Activated naive CD4-positive, alpha-beta T cell treated with anti-CD3 and anti-CD28 coated beads for 36 hours (primary cell): ENCODE measurements at regions of chr10 and their contacts with region 1.

Region 1: DNA sequence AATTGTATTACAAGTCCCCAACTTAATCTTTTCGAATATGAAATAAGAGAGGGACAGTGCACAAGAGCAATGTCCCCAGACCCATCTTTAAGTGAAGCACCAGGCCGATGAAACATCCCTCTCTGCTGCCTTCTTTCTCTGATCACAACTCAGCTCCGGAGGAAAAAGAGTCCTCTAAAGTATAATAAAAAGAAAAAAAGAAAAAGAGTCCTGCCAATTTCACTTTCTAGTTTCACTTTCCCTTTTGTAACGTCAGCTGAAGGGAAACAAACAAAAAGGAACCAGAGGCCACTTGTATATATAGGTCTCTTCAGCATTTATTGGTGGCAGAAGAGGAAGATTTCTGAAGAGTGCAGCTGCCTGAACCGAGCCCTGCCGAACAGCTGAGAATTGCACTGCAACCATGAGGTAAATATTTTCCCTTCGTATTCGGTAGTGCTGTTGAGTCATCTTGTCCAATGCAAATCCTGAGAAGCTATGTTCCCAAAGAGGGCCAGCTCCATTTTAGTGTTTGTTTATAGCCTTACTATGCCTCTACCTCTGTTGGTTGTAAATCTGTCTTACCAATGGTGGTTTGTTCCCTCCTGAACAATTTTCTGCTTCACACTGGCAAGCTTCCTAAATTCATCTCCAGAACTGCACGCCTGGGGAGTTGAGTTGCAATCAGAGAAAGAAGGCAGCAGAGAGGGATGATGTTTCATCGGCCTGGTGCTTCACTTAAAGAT is at the start of gene IFIT2:
- DNase-seq: peak; percentile 22
- H3K4me3 Mint-ChIP-seq: peak within 1 kb of the TSS; percentile 79
- H3K27ac Mint-ChIP-seq: peak within 1 kb of the TSS; percentile 65
- H3K4me1 Mint-ChIP-seq: peaks cover 32% of the 10 kb centered on the region
- H3K27me3 Mint-ChIP-seq: no peaks in the 10 kb centered on the region
- total RNA-seq, gene IFIT2: 35.7 to 39.4 TPM

Region 2: GRCh38 chr10:89327784-89328441 is 26.0 kb after region 1 on chr10 and contains the start of gene IFIT3:
- CTCF ChIA-PET with region 1: interaction called, 3 read pairs
- intact Hi-C with region 1: loop called (anchors 1 kb)
- DNase-seq: peak; percentile 39
- H3K4me3 Mint-ChIP-seq: peak within 1 kb of the TSS; percentile 67
- H3K27ac Mint-ChIP-seq: peak within 1 kb of the TSS; percentile 17
- H3K4me1 Mint-ChIP-seq: peaks cover 39% of the 10 kb centered on the region
- H3K27me3 Mint-ChIP-seq: peaks cover 2% of the 10 kb centered on the region
- total RNA-seq, gene IFIT3: 13.9 to 14.4 TPM